GM18951 (cell line): ENCODE measurements at regions of chr16 and their contacts with region 1.

Region 1: DNA sequence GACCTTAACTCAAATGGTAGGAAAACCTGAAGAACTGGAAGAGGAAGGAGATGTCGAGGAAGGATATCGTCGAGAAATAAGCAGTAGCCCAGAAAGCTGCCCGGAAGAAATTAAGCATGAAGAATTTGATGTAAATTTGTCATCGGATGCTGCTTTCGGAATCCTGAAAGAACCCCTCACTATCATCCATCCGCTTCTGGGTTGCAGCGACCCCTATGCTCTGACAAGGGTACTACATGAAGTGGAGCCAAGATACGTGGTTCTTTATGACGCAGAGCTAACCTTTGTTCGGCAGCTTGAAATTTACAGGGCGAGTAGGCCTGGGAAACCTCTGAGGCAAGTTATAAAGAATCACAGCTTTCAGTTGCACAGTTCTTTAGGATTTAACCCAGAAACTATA is 15.5 kb downstream of the ERCC4 start:
- POLR2A ChIP-seq: no peak

Region 2: GRCh38 chr16:14310519-14310991 is 375.1 kb after region 1 on chr16:
- in situ Hi-C with region 1: no loop called
- POLR2A ChIP-seq: peak; percentile 17

Region 3: DNA sequence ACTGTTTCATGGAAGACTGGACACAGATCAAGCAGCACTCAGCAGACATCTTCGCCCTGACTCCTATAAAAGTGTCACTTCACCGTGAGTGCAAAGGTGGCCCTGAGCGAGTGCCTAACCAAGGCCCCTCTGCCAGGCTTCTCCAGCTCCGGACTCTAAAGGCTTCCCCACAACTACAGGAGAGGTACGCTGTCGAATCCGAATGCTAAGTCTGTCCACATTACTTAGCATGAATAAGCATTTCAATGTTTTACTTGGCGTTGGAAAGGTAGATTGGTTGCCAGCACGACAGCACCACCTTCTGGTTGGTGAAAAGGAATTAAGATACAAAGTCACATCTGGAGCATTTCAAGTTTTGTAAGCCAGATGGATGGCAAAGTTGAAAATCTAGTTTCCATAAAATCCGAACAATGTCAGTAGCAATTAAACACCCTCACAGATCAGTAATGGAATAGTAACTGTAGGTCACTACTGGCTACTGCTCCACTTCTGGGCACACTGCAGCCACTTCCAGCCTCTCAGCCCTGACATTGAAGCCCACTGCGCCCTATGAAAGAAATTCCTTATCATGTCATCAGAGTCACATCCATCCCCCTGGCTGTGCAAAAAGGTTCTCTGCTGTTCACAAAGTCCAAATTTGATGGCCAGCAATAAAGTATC is 593.7 kb after region 1 on chr16:
- in situ Hi-C with region 1: loop called (anchors 25 kb)
- POLR2A ChIP-seq: no peak